Endothelial cell of umbilical vein (primary cell): ENCODE measurements at regions of chr5 and their contacts with region 1.

Region 1: DNA sequence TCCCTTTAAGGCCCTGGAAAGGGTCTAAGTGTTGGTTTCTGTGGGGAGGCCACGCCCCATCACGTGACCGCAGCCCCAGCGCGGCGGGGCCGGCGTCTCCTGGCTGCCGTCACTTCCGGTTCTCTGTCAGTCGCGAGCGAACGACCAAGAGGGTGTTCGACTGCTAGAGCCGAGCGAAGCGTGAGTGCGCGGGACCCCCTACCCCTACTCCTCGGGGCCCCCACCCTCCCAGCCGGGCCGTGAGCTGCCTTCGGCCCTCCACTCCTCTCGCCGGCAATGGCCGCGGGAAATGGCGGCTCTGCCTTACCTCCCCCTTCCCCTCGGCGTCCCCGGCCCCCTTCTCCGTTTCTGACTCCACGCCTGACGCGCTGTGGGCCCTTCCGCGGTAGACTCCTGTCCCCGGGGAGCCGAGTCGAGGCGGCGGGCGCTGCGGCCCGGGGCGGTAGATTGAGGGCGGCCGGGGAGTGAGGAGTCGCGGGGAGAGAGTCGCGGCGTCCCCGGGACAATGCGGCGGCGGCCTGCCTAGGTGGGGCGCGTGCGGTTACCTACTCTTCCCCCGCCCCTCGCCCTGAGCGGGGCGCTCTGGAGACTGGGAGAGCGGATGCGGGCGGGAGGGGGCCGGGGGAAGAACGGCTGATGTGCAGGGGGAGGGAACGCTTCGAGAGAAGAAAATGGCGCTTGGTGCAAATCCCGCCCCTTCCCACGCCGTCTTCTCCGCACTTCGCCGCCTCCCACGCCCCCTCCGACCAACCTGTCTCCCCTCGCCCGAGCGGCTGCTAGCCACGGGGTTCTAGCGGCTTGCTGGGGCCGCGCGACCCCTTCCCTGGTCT is at the start of gene SUB1:
- DNase-seq: peak; percentile 93
- H3K4me3 ChIP-seq: peak within 1 kb of the TSS; percentile 89 to 99 (median 94)
- H3K27ac ChIP-seq: peak within 1 kb of the TSS; percentile 84
- H3K4me1 ChIP-seq: peaks cover 24% of the 10 kb centered on the region
- H3K27me3 ChIP-seq: no peaks in the 10 kb centered on the region
- CTCF ChIP-seq: no peak
- POLR2A ChIP-seq: peak; percentile 84
- total RNA-seq, gene SUB1: 246 and 252 TPM in 2 replicates

Region 2: DNA sequence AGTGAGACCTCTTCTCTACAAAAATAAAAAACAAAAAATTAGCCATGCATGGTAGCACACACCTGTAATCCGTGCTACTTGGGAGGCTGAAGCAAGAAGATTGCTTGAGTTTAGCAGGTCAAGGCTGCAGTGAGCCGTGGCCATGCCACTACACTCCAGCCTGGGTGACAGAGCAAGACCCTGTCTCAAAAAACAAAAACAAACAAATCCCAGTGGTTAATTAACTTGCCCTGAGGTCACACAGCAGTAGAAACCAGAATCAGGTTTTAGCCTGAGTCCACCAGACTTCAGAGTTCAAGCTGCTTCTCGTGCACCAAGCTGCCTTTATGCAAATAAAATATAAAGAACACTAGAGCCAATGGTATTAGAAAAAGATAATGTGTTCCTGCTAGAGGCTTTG is 581.3 kb before region 1 on chr5:
- CTCF ChIA-PET with region 1: no interaction called
- POLR2A ChIA-PET with region 1: no interaction called
- dilution Hi-C with region 1: no loop called
- intact Hi-C with region 1: no loop called
- DNase-seq: no peak
- H3K4me3 ChIP-seq: no peak overlapping the region
- H3K27ac ChIP-seq: no peak overlapping the region
- H3K4me1 ChIP-seq: no peaks in the 10 kb centered on the region
- H3K27me3 ChIP-seq: no peaks in the 10 kb centered on the region
- CTCF ChIP-seq: no peak
- POLR2A ChIP-seq: no peak

Region 3: GRCh38 chr5:32232441-32233219 is 353.0 kb before region 1 on chr5:
- CTCF ChIA-PET with region 1: interaction called, 33 read pairs
- POLR2A ChIA-PET with region 1: no interaction called
- dilution Hi-C with region 1: no loop called
- intact Hi-C with region 1: loop called (anchors 2 kb)
- DNase-seq: peak; percentile 77
- H3K4me3 ChIP-seq: no peak overlapping the region
- H3K27ac ChIP-seq: no peak overlapping the region
- H3K4me1 ChIP-seq: peaks cover 16% of the 10 kb centered on the region
- H3K27me3 ChIP-seq: no peaks in the 10 kb centered on the region
- CTCF ChIP-seq: peak; percentile 79 to 84
- POLR2A ChIP-seq: no peak

Region 4: DNA sequence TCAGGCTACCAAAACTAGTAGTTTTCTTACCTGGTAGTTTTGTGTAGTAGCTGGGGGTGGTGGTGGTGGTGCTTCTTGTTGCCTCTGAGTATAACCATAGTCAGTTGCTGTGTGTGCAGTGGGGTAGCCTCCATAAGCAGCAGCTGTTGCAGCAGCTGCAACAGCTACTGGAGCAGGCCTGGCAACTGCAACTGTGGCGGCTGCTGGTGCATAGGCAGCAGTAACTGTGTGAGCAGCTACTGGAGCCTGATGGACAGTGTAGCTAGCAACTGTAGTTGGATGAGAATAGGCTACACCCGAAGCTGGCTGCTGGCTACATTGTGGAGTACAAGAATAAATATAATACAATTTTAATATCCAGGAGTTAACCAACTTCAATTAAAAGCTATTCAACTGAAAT is 165.9 kb before region 1 on chr5:
- CTCF ChIA-PET with region 1: interaction called, 34 read pairs
- POLR2A ChIA-PET with region 1: no interaction called
- dilution Hi-C with region 1: no loop called
- intact Hi-C with region 1: loop called (anchors 10 kb)
- DNase-seq: no peak
- H3K4me3 ChIP-seq: no peak overlapping the region
- H3K27ac ChIP-seq: no peak overlapping the region
- H3K4me1 ChIP-seq: peaks cover 2% of the 10 kb centered on the region
- H3K27me3 ChIP-seq: no peaks in the 10 kb centered on the region
- CTCF ChIP-seq: no peak
- POLR2A ChIP-seq: no peak

Region 5: DNA sequence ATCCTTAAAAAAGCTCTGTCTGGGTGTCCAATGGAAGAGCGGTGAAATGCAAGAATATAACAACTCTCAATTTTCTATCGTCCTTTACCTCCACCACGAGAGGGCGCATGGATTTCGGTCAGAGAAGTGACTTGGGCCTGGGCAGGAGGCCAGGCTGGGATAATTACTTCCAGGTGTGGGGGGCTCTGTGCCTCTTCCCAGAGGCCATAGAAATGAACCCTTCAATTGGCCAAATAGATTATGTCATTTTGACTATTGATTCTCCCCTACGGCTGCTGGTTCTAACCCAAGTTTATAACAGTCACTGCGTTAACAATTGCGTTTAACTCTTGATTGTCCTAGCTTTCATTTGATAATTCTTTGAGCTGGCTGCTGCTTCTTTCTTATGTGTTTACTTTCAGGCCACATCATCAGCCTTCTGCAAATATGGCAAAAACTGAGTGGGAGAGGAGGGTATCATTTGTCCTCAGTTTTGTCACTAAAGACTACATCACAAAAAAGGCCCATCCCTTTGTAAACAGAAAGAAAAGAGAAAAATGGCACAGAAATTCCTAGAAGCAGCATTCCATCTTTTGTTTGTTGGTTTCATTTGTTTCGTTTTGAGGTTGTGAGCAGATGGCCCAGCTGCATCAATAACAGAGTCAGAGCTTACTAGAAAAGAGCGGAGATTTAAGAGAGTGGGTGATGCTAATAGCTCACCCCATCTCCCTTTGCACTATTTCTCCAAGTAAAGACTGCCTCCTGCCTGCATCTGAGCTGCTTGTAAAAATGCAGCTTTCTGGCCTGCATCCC is 95.7 kb before region 1 on chr5:
- CTCF ChIA-PET with region 1: interaction called, 381 read pairs
- POLR2A ChIA-PET with region 1: interaction called, 6 read pairs
- dilution Hi-C with region 1: no loop called
- intact Hi-C with region 1: loop called (anchors 1 kb)
- DNase-seq: peak; percentile 73
- H3K4me3 ChIP-seq: no peak overlapping the region
- H3K27ac ChIP-seq: no peak overlapping the region
- H3K4me1 ChIP-seq: no peaks in the 10 kb centered on the region
- H3K27me3 ChIP-seq: no peaks in the 10 kb centered on the region
- CTCF ChIP-seq: peak; percentile 65 to 67
- POLR2A ChIP-seq: no peak

Region 6: DNA sequence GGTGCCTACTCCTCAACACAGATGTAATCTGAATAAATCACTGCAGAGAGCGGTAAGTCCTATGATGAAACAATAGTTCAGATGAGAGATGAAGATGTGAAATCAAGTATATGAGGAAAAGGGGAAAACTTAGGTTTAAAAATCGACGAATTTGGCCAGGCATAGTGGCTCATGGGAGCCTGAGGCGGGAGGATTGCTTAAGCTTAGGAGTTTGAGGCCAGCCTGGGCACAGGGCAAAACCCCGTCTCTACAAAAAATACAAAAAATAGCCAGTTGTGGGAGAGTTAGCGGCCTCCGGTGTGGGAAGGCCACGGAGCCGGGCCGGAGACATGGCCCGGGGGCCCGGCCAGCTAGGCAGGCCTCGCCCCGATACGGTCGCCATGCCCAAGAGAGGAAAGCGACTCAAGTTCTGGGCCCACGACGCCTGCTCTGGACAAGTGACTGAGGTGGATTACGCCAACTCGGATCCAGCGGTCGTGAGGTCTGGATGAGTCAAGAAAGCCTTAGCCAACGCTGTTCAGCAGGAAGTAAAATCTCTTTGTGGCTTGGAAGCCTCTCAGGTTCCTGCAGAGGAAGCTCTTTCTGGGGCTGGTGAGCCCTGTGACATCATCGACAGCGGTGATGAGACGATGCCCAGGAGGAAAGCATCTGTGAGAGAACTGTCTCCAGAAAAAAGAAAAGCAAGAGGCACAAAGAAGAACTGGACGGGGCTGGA is 63.1 kb before region 1 on chr5:
- CTCF ChIA-PET with region 1: interaction called, 13 read pairs
- POLR2A ChIA-PET with region 1: no interaction called
- dilution Hi-C with region 1: no loop called
- intact Hi-C with region 1: no loop called
- DNase-seq: no peak
- H3K4me3 ChIP-seq: no peak overlapping the region
- H3K27ac ChIP-seq: no peak overlapping the region
- H3K4me1 ChIP-seq: no peaks in the 10 kb centered on the region
- H3K27me3 ChIP-seq: no peaks in the 10 kb centered on the region
- CTCF ChIP-seq: no peak
- POLR2A ChIP-seq: no peak

Region 7: GRCh38 chr5:32794086-32794485 is 208.4 kb after region 1 on chr5:
- CTCF ChIA-PET with region 1: no interaction called
- POLR2A ChIA-PET with region 1: no interaction called
- dilution Hi-C with region 1: no loop called
- intact Hi-C with region 1: no loop called
- DNase-seq: no peak
- H3K4me3 ChIP-seq: no peak overlapping the region
- H3K27ac ChIP-seq: no peak overlapping the region
- H3K4me1 ChIP-seq: no peaks in the 10 kb centered on the region
- H3K27me3 ChIP-seq: no peaks in the 10 kb centered on the region
- CTCF ChIP-seq: no peak
- POLR2A ChIP-seq: no peak

Region 8: GRCh38 chr5:33379757-33380156 is 794.1 kb after region 1 on chr5:
- CTCF ChIA-PET with region 1: interaction called, 10 read pairs
- POLR2A ChIA-PET with region 1: no interaction called
- dilution Hi-C with region 1: no loop called
- intact Hi-C with region 1: no loop called
- DNase-seq: peak; percentile 56
- H3K4me3 ChIP-seq: no peak overlapping the region
- H3K27ac ChIP-seq: no peak overlapping the region
- H3K4me1 ChIP-seq: no peaks in the 10 kb centered on the region
- H3K27me3 ChIP-seq: peaks cover 2 to 4% of the 10 kb centered on the region in 2 experiments
- CTCF ChIP-seq: peak; percentile 66 to 69
- POLR2A ChIP-seq: no peak